AG04449 (cell line): ENCODE measurements at regions of chr6 and their contacts with region 1.

Region 1: GRCh38 chr6:3251462-3252314 is 7.1 kb upstream of the PSMG4 start:
- DNase-seq: no peak
- H3K4me3 ChIP-seq: no peak overlapping the region
- CTCF ChIP-seq: peak; percentile 96

Region 2: GRCh38 chr6:2111162-2111677 is 1140.5 kb before region 1 on chr6:
- CTCF ChIA-PET with region 1: no interaction called
- POLR2A ChIA-PET with region 1: no interaction called
- DNase-seq: no peak
- H3K4me3 ChIP-seq: no peak overlapping the region
- CTCF ChIP-seq: no peak

Region 3: DNA sequence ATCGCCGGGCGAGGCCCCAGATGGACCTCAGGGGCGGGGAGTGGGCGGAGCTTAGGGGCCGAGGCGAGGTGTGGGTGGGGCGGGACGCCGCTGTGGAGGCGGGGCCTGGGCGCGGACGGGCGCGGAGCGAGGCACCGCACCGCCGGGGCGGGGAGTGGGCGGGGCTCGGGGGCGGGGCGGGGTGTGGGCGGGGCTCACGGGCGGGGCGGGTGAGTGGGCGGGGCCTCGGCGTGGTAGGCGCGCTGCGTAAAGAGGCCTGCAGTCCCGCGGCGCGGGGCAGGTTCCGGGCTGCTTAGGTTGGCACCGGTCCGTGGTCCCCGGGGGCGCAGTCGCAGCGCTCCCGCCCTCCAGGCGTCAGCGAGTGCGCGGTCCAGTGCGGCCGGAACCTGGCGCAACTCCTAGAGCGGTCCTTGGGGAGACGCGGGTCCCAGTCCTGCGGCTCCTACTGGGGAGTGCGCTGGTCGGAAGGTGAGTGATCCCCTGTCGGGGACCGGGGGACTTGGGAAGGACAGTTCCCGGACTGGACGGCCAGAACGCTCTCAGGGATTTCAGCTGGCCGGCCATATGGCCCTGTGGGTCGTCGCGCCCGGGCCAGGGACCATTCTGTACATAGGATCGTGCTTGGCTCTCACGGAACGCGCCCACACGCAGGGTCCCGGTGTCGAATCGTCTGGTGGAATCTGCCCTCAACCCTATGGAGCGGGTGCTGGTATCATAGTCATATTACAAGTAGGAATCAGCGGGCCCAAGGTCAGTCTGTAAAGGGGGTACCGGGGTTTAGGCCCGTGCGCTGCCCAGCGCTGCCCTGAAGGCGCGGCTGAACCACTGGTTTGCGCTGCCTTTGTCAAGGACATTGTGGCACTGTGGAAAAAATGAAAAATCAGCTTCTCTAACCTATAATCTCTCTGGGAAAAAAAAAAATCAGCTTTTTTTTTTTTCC is 251.8 kb before region 1 on chr6 and contains the start of gene NQO2:
- CTCF ChIA-PET with region 1: interaction called, 10 read pairs
- POLR2A ChIA-PET with region 1: no interaction called
- DNase-seq: no peak
- H3K4me3 ChIP-seq: peak within 1 kb of the TSS; percentile 85
- CTCF ChIP-seq: no peak

Region 4: GRCh38 chr6:3125815-3126214 is 125.9 kb before region 1 on chr6:
- CTCF ChIA-PET with region 1: interaction called, 221 read pairs
- POLR2A ChIA-PET with region 1: no interaction called
- DNase-seq: no peak
- H3K4me3 ChIP-seq: no peak overlapping the region
- CTCF ChIP-seq: no peak

Region 5: GRCh38 chr6:3157131-3157927 is 94.4 kb before region 1 on chr6 and contains the start of gene TUBB2A:
- CTCF ChIA-PET with region 1: interaction called, 86 read pairs
- POLR2A ChIA-PET with region 1: interaction called, 42 read pairs
- DNase-seq: no peak
- H3K4me3 ChIP-seq: peak within 1 kb of the TSS; percentile 78
- CTCF ChIP-seq: peak; percentile 69

Region 6: DNA sequence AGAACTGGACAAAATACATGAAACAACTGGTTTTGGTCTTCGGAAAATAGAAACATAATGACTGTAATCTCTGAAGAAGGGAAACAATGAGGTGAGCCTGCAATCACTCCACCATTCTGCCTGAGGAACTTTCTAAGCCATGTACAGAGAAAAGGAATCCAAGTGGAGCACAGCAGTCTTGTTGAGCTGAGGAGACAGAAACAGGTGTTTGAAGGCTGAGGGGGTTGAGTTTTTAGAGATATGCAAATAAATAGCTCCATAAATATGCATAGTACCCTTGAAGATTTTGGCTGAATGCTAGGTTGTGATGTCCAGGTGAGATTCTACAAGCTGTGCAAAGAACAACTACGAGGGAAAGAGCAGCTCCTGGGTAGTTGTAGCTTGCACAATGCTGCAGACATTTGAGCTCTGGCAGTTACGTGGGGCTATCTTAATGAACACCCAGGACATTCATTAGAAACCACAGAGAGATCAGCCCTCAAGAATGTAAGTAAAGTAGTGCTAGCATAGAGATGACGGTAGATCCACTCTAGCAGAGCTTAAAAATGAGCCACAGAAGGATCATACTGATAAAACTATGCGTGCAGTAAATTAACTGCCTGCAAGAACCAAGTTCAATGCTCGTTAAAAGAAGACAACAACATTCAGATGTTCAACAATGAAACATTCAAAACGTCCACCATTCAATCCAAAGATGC is 48.5 kb before region 1 on chr6:
- CTCF ChIA-PET with region 1: interaction called, 10 read pairs
- POLR2A ChIA-PET with region 1: interaction called, 3 read pairs
- DNase-seq: peak; percentile 84
- H3K4me3 ChIP-seq: no peak overlapping the region
- CTCF ChIP-seq: no peak

Region 7: GRCh38 chr6:3239110-3239830 is 12.4 kb before region 1 on chr6:
- CTCF ChIA-PET with region 1: interaction called, 81 read pairs
- POLR2A ChIA-PET with region 1: interaction called, 9 read pairs
- DNase-seq: no peak
- H3K4me3 ChIP-seq: no peak overlapping the region
- CTCF ChIP-seq: peak; percentile 7

Region 8: GRCh38 chr6:3630258-3630835 is 378.7 kb after region 1 on chr6:
- CTCF ChIA-PET with region 1: no interaction called
- POLR2A ChIA-PET with region 1: no interaction called
- DNase-seq: no peak
- H3K4me3 ChIP-seq: no peak overlapping the region
- CTCF ChIP-seq: no peak